AG04449 (cell line): ENCODE measurements at regions of chr2 and their contacts with region 1.

Region 1: GRCh38 chr2:197297772-197298318 is 12.7 kb downstream of the ANKRD44 start:
- DNase-seq: no peak
- H3K4me3 ChIP-seq: no peak overlapping the region
- CTCF ChIP-seq: no peak

Region 2: DNA sequence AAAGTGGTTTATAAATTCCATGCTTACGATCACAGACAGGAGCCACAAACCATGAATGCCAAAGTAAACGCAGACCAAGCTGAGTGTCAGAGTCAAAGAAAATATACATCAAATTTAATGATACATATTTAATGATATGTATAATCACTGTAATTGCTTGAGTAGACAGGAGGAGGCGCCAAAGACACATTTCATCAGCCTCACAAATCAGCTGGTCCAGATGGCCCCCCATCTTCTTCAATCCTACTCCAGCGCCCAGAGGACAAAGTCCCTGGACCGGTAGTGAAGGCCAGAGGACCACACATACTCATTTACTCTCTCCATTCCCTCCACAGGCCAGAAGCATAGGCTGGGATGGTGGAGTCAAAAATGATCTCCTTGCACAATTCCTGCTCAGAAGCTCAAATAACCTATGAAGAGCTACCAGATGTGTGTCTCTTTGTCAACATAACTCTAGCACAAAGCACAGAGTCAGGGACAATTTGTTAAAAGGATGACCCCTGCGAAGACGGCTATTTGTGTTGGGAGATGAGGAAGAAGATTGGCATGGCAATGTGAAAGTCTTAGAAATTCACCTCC is 222.0 kb before region 1 on chr2:
- CTCF ChIA-PET with region 1: no interaction called
- POLR2A ChIA-PET with region 1: no interaction called
- DNase-seq: no peak
- H3K4me3 ChIP-seq: no peak overlapping the region
- CTCF ChIP-seq: peak; percentile 18

Region 3: DNA sequence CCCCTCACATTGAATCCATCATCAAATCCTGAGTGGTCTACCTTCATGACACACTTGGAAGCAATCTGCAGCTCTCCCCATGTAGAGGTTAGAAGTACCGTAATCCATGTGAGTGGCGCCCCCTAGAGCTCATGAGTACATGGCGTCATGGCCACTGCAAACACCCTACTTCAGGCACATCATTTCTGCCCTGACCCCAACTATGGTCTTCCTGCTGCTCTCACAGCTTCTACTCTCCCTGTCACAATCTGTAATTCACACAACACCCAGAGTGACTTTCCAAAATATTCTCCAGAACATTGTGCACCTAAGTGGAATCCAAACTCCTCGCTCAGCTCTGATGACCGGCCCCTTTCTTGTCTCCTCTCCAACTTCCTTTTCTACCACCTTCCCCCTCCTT is 129.1 kb before region 1 on chr2:
- CTCF ChIA-PET with region 1: no interaction called
- POLR2A ChIA-PET with region 1: no interaction called
- DNase-seq: no peak
- H3K4me3 ChIP-seq: no peak overlapping the region
- CTCF ChIP-seq: peak; percentile 59

Region 4: DNA sequence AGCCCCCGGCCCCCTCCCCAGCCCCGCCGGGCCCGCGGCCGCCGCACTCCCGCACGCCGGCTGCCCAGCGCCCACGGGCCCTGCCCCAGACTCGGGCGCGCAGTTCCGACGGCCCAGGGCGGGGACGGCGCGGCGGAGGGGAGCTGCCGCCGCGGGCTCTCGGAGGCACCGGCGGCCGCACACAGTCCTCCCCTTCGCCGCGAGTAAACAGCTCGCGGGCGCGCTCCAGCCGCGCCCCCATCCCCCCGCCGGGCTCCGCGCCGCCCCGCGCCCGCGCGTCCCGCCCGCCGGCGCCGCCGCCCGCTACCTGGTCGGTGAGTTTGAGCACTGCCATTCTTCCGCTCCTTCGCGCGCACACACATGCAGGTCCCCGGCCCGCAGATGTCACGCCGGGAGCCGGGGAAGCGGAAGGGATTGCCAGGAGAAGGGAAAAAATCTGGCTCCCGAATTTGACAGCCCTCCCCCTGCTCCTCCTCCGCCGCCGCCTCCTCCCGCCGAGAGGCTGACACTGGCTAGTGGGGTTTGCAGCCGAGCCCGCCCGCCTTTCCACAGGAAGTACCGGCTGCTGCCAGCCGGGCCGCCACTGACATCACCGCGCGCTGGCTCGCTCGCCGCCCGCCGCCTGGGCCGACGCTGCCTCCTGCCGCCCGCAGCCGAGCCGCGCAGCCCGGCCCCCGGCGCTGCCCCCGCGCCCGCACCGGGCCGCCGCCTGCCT is 12.6 kb after region 1 on chr2 and contains the start of gene ANKRD44:
- CTCF ChIA-PET with region 1: interaction called, 10 read pairs
- POLR2A ChIA-PET with region 1: no interaction called
- DNase-seq: no peak
- H3K4me3 ChIP-seq: peak within 1 kb of the TSS; percentile 77
- CTCF ChIP-seq: no peak